ENCODE measurements at regions of chr17 and their contacts with region 1.

Region 1: GRCh38 chr17:4565209-4566141 is 5.1 kb upstream of the GGT6 start:
- DNase-seq: no peak
- H3K4me3 ChIP-seq: no peak overlapping the region
- H3K27ac ChIP-seq: no peak overlapping the region
- H3K4me1 ChIP-seq: peaks cover 0 to 37% (median 15%) of the 10 kb centered on the region in 3 donors
- H3K27me3 ChIP-seq: no peaks in the 10 kb centered on the region
- CTCF ChIP-seq: peak; percentile 63 to 81 (median 76)
- POLR2A ChIP-seq: no peak

Region 2: GRCh38 chr17:4623249-4623648 is 57.8 kb after region 1 on chr17:
- intact Hi-C with region 1: loop called (anchors 5 kb)
- DNase-seq: no peak
- H3K4me3 ChIP-seq: no peak overlapping the region
- H3K27ac ChIP-seq: no peak overlapping the region
- H3K4me1 ChIP-seq: peaks cover 0 to 26% (median 7%) of the 10 kb centered on the region in 3 donors
- H3K27me3 ChIP-seq: peaks cover 0 to 3% (median 0%) of the 10 kb centered on the region in 4 donors
- CTCF ChIP-seq: no peak
- POLR2A ChIP-seq: no peak

Region 3: DNA sequence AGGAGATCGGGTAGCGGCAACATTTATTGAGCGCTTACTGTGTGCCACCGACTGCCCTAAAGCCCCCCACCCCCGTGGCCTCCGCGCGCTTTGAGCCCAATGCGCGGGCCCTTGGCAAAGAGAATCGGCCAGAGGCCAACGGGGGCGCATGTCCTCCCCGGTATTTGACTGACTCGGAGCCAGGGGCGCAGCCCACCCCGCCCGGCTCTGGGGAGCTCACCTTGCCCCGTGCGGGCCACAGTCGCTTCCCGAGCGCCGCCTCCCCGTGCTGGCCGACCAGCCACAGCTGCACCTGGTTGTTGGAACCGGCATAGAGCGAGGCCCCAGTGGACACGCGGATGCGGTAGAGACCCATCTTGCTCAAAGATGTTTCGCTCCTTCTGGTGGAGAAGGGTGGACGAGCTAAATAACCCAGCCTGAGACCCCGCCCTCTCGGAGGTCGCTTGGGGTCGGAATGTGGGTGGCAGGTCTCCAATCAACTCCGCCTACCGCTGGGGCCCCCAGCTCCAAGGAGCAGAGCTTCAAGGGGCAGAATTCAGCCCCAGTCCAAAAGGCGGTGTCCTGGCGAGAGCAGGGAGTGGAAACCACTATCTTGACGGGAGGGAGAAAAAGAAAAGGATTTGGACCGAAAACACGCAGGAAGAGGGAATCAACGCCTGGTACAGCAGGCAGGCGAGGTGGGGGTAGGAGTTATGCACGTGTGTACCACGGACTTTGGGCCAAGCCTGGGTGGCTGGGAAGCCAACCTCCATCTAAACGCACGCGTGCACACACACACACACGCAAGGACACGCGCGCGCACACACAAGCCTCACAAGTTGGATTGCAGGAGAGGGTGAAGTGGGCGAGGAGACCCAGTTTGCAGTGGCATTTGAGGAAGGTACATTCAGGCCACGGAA is 76.1 kb after region 1 on chr17 and contains the start of gene ALOX15:
- intact Hi-C with region 1: no loop called
- DNase-seq: no peak
- H3K4me3 ChIP-seq: peak within 1 kb of the TSS in 1 of 4 donors; percentile 12
- H3K27ac ChIP-seq: no peak within 1 kb of the TSS
- H3K4me1 ChIP-seq: peaks cover 0 to 37% (median 12%) of the 10 kb centered on the region in 3 donors
- H3K27me3 ChIP-seq: peaks cover 8 to 89% (median 16%) of the 10 kb centered on the region in 4 donors
- CTCF ChIP-seq: no peak
- POLR2A ChIP-seq: no peak
- total RNA-seq, gene ALOX15: 0.30 TPM in 1 of 4 donors, not detected in the others

Region 4: GRCh38 chr17:4678427-4679026 is 113.1 kb after region 1 on chr17:
- intact Hi-C with region 1: no loop called
- DNase-seq: no peak
- H3K4me3 ChIP-seq: no peak overlapping the region
- H3K27ac ChIP-seq: no peak overlapping the region
- H3K4me1 ChIP-seq: peaks cover 0 to 14% (median 0%) of the 10 kb centered on the region in 3 donors
- H3K27me3 ChIP-seq: no peaks in the 10 kb centered on the region
- CTCF ChIP-seq: no peak
- POLR2A ChIP-seq: no peak

Region 5: DNA sequence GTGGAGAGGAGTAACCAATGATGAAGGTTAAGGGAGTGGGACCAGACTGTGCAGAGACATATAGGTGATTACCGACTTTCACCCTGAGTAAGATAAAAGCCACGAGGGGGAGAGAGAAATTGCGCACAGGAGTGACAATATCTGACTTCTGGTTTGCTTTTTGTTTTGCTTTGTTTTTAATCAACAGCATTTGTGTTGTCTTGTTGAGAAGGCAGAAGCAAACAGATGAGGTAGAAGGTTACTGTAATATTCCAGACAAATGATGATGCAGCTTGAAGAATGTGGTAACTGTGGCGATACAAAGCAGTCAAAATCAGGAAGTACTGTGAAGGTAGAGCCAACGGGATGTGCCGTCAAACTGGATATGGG is 130.9 kb after region 1 on chr17:
- intact Hi-C with region 1: no loop called
- DNase-seq: no peak
- H3K4me3 ChIP-seq: no peak overlapping the region
- H3K27ac ChIP-seq: no peak overlapping the region
- H3K4me1 ChIP-seq: peaks cover 0 to 4% (median 0%) of the 10 kb centered on the region in 3 donors
- H3K27me3 ChIP-seq: no peaks in the 10 kb centered on the region
- CTCF ChIP-seq: no peak
- POLR2A ChIP-seq: no peak

Region 6: GRCh38 chr17:4747847-4748246 is 182.4 kb after region 1 on chr17:
- intact Hi-C with region 1: no loop called
- DNase-seq: no peak
- H3K4me3 ChIP-seq: no peak overlapping the region
- H3K27ac ChIP-seq: peak overlapping the region in 2 of 4 donors; percentile 18 to 20
- H3K4me1 ChIP-seq: peaks cover 0 to 24% (median 0%) of the 10 kb centered on the region in 3 donors
- H3K27me3 ChIP-seq: peaks cover 0 to 66% (median 0%) of the 10 kb centered on the region in 4 donors
- CTCF ChIP-seq: no peak
- POLR2A ChIP-seq: peak in 1 of 4 donors; percentile 20

Measured in esophagus squamous epithelium (tissue), 5 donors.